ENCODE measurements at regions of chr9 and their contacts with region 1.

Region 1: GRCh38 chr9:129495534-129496325 is 125.2 kb downstream of the C9orf50 start:
- DNase-seq: peak; percentile 93
- H3K4me3 ChIP-seq: peak overlapping the region; percentile 29 to 55
- H3K27ac ChIP-seq: peak overlapping the region; percentile 99 to 100
- H3K4me1 ChIP-seq: peaks cover 38% of the 10 kb centered on the region
- H3K27me3 ChIP-seq: no peaks in the 10 kb centered on the region
- CTCF ChIP-seq: peak in 1 of 4 experiments; percentile 26
- POLR2A ChIP-seq: no peak

Region 2: GRCh38 chr9:129139993-129140396 is 355.7 kb before region 1 on chr9:
- intact Hi-C with region 1: loop called (anchors 5 kb)
- DNase-seq: peak; percentile 94
- H3K4me3 ChIP-seq: peak overlapping the region; percentile 30 to 39
- H3K27ac ChIP-seq: peak overlapping the region; percentile 99
- H3K4me1 ChIP-seq: peaks cover 36% of the 10 kb centered on the region
- H3K27me3 ChIP-seq: no peaks in the 10 kb centered on the region
- CTCF ChIP-seq: peak in 2 of 4 experiments; percentile 20 to 27
- POLR2A ChIP-seq: peak; percentile 85

Region 3: DNA sequence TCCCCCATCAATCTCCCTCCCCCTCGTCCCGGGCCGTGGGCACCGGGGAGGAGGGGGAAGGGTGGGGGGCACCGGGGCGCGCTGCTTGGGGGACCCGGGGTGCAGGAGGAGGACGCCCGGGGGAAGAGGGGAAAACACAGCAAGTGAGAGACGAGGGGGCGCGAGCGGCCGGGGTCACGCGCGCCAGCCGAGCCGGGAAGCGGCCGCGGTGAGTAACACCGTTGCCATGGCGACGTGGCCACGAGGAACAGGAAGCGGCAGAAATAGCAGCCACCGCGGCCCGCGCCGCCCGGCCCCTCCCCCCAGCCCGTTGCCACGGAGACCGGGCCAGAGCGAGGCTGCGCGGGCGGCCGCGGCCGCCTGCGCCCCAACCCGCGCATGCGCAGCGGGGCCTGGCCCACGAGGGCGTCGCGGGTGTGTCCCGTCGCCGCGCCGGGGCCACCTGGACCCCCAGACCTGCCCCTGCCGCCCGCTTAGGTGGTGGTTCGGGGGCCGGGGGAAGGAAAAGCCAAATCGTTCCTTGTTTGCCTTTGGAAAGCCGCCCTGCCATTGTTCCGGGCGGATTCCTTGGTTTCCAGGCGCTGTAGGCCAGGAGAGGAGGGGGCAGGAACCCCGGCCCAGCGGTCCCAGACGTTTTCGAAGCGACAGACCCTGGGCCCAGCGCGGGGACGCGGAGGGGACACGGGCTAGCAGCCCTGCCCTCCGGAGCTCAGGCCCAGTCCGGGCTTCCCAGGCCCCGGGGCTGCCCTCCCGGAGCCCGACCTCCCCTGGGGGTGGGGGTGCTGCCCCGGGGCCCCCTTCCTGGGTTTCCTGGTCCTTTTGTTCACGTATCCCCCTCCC is 82.0 kb before region 1 on chr9:
- intact Hi-C with region 1: no loop called
- DNase-seq: peak; percentile 99
- H3K4me3 ChIP-seq: peak overlapping the region; percentile 55 to 58
- H3K27ac ChIP-seq: peak overlapping the region; percentile 99
- H3K4me1 ChIP-seq: peaks cover 13% of the 10 kb centered on the region
- H3K27me3 ChIP-seq: no peaks in the 10 kb centered on the region
- CTCF ChIP-seq: peak in 2 of 4 experiments; percentile 18 to 23
- POLR2A ChIP-seq: peak; percentile 94

Region 4: GRCh38 chr9:129569502-129570449 is 74.0 kb after region 1 on chr9:
- intact Hi-C with region 1: loop called (anchors 5 kb)
- DNase-seq: no peak
- H3K4me3 ChIP-seq: no peak overlapping the region
- H3K27ac ChIP-seq: peak overlapping the region; percentile 77 to 80
- H3K4me1 ChIP-seq: peaks cover 5% of the 10 kb centered on the region
- H3K27me3 ChIP-seq: no peaks in the 10 kb centered on the region
- CTCF ChIP-seq: peak in 2 of 4 experiments; percentile 32 to 53
- POLR2A ChIP-seq: no peak

Region 5: GRCh38 chr9:129597355-129598088 is 101.8 kb after region 1 on chr9:
- intact Hi-C with region 1: loop called (anchors 5 kb)
- DNase-seq: peak; percentile 66
- H3K4me3 ChIP-seq: peak overlapping the region; percentile 14 to 36
- H3K27ac ChIP-seq: peak overlapping the region; percentile 80 to 93
- H3K4me1 ChIP-seq: peaks cover 9% of the 10 kb centered on the region
- H3K27me3 ChIP-seq: no peaks in the 10 kb centered on the region
- CTCF ChIP-seq: peak in 1 of 4 experiments; percentile 17
- POLR2A ChIP-seq: peak; percentile 22